ENCODE measurements at regions of chr20 and their contacts with region 1.

Region 1: DNA sequence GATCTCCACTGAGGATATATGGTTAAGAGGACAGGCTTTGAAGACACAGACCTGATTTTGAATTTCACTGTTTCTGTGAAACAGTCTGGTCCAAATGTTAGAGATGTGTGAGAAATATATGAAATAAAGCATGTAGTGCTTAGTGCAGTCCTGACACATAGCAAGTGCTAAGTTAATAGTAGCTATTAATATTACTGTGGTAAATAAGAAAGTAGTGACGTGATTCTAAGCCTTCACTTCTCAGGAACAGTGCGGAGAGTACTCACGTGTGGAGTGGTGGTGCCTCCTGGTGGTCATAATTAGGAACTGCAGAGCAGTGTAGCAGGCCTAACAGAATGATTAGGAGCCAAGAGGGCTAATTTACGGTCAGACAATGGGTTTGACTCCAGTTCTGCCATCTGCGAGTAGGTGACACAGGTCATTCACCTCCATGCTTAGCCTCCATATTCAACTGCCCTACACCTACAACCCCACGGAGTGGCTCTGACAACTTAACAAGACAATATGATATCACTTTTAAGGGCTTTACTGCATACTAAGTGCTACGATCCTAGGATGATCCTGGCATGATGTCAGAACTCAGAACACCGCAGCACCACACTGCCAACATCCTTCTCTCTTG is 106.2 kb downstream of the JPH2 start:
- DNase-seq: peak; percentile 84
- ATAC-seq: peak; percentile 96
- H3K4me3 Mint-ChIP-seq: peak overlapping the region; percentile 3
- H3K27ac Mint-ChIP-seq: no peak overlapping the region
- H3K4me1 Mint-ChIP-seq: peaks cover 16% of the 10 kb centered on the region
- H3K27me3 Mint-ChIP-seq: no peaks in the 10 kb centered on the region

Region 2: DNA sequence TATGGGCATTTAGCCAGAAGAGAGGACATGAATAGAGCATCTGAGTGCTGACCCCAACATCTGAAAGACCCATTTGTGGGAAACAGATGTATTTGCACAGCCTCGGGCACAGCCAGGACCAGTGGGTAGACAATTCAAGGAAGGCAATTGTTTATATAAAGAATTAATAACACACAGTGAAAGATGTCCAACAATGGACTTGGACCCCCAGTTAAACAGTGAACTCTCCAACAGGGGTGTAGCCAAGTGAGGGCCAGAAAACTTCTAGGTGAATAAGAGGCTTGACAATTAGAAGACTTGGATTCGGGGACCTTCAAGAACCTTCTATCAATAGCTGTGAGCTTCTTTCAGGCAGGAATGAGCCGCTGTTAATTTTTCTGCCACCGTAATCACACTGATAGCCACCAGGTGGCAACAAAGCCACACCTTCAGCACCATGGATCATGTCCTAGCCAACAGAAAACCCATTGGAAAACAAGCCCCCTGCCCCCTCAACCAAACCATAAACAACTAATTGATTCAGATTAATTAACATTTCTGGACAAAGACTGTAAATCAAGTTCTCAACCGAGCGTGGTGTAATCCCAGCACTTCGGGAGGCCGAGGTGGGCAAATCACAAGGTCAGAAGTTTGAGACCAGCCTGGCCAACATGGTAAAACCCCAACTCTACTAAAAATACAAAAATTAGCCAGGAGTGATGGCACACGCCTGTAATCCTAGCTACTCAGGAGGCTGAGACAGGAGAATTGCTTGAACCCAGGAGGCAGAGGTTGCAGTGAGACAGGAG is 631.8 kb before region 1 on chr20:
- CTCF ChIA-PET with region 1: interaction called, 4 read pairs
- POLR2A ChIA-PET with region 1: no interaction called
- intact Hi-C with region 1: loop called in 1 of 2 experiments (anchors 1 kb)
- DNase-seq: peak; percentile 66
- ATAC-seq: peak; percentile 69
- H3K4me3 Mint-ChIP-seq: no peak overlapping the region
- H3K27ac Mint-ChIP-seq: no peak overlapping the region
- H3K4me1 Mint-ChIP-seq: no peaks in the 10 kb centered on the region
- H3K27me3 Mint-ChIP-seq: peaks cover 23% of the 10 kb centered on the region

Region 3: DNA sequence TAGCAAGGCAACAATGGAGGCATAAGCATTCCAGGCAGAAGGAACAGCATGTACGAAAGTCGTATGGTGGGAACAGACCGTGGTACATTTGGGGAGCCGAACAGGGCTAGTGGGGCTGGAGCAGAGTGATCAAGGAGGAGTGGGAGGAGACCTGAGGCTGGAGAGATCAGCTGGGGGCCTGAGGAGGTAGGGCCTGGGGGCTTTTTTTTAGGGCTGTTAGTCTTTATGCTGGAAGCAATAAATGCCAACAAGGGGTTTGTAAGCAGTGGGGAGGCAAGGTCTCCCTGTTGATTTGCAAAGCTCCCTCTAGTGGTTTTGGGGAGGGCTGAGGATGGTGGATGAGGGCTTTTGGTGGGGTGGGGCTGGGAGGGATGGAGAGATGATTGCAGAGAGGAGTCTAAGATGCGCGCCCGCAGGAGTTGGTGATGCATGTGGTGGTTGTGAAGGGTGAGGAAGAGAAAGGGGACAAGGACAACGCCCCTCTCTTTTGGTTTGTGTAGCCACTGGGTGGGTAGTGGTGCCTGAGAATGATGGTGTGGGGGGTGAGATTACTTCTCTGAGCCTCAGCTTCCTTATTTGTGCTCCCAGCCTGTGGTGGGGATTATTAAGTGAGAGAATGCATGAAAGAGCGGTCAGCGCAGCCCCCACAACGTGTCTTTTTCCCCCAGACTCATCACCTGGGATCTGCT is 240.2 kb before region 1 on chr20:
- CTCF ChIA-PET with region 1: interaction called, 3 read pairs
- POLR2A ChIA-PET with region 1: no interaction called
- intact Hi-C with region 1: loop called in 1 of 2 experiments (anchors 2 kb)
- DNase-seq: peak; percentile 66
- ATAC-seq: peak; percentile 63
- H3K4me3 Mint-ChIP-seq: no peak overlapping the region
- H3K27ac Mint-ChIP-seq: no peak overlapping the region
- H3K4me1 Mint-ChIP-seq: peaks cover 30% of the 10 kb centered on the region
- H3K27me3 Mint-ChIP-seq: peaks cover 7% of the 10 kb centered on the region

Region 4: GRCh38 chr20:43914311-43915210 is 166.2 kb before region 1 on chr20 and contains the start of gene TOX2:
- CTCF ChIA-PET with region 1: no interaction called
- POLR2A ChIA-PET with region 1: no interaction called
- intact Hi-C with region 1: loop called in 1 of 2 experiments (anchors 5 kb)
- DNase-seq: peak; percentile 63
- ATAC-seq: peak; percentile 30
- H3K4me3 Mint-ChIP-seq: peak within 1 kb of the TSS; percentile 76
- H3K27ac Mint-ChIP-seq: peak within 1 kb of the TSS; percentile 53
- H3K4me1 Mint-ChIP-seq: peaks cover 28% of the 10 kb centered on the region
- H3K27me3 Mint-ChIP-seq: peaks cover 45% of the 10 kb centered on the region
- total RNA-seq, gene TOX2: 1.6 to 3.0 TPM

Region 5: DNA sequence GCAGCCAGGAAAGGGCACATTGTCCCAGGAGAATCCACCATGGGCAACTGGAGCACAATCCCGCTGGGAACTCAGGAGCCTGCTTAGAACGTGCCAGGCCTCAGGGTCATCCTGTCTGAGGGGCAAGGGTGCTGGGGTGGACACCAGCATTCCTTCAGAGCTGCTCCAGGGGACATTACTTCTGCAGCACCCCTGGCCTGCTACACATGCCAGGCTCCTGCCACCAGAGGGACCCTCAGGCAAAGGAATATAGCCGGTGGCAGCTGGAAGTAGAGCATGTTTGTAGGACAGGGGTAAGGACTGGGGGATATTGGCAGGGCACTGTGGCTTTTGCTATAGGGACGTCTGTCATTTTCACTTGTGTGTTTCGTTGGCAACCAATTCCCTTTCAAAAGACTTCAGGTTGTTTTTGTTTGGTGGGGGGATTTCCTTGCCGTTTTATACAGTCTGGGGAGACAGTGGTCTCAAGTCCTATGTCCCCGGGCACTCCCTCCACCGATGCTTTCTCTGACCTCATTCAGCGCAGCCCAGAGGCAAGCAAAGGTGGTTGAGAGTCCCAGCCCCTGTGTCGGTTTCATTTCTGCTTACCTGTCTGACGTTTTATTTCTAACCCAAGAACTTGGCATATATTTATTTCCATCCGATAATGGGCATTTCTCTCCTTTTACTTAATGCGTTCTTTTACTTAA is 24.6 kb before region 1 on chr20:
- CTCF ChIA-PET with region 1: interaction called, 8 read pairs
- POLR2A ChIA-PET with region 1: no interaction called
- intact Hi-C with region 1: loop called (anchors 1 kb)
- DNase-seq: peak; percentile 70
- ATAC-seq: peak; percentile 81
- H3K4me3 Mint-ChIP-seq: no peak overlapping the region
- H3K27ac Mint-ChIP-seq: no peak overlapping the region
- H3K4me1 Mint-ChIP-seq: peaks cover 3% of the 10 kb centered on the region
- H3K27me3 Mint-ChIP-seq: no peaks in the 10 kb centered on the region

Region 6: DNA sequence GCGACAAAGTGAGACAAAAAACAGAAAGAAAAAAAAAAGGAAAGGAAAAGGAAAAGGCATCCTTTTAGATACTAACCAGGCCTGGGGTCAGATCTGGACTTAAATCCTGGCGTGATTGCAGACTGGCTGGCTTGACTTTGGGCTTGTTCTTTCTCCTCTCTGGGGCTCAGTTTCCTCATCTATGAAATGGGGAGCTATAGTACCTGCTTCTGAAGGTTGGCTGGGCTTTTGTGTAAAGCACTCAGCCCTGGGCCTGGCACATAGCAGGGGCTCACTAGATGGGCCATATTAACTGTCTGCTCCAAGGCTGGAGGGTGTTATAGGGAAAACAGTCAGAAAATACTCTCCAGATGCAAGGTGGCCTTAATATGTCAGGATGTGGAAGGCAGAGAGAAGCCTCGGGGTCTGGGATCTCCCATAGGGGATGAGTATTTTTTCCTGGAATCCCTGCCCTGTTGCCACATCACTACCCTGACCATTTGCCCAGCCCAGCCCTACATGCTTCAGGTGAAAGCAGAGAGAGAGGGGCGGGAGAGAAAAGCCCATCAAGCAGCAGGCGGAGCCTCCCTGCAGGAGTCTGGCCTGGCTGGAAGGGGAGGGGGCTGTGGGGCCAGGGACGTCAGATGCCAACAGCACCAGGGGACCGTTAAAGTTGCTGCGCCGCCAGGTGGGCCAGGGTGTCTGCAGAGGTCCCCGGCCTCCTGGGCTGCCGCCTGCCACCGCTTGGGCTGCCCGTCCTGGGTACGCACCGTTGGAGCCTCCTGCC is 255.1 kb after region 1 on chr20:
- CTCF ChIA-PET with region 1: no interaction called
- POLR2A ChIA-PET with region 1: no interaction called
- intact Hi-C with region 1: no loop called
- DNase-seq: no peak
- ATAC-seq: no peak
- H3K4me3 Mint-ChIP-seq: no peak overlapping the region
- H3K27ac Mint-ChIP-seq: no peak overlapping the region
- H3K4me1 Mint-ChIP-seq: no peaks in the 10 kb centered on the region
- H3K27me3 Mint-ChIP-seq: peaks cover 9% of the 10 kb centered on the region

Measured in activated CD4-positive, alpha-beta T cell treated with anti-CD3 and anti-CD28 coated beads for 36 hours (primary cell).